HEK293T (cell line): ENCODE measurements at regions of chr12 and their contacts with region 1.

Region 1: DNA sequence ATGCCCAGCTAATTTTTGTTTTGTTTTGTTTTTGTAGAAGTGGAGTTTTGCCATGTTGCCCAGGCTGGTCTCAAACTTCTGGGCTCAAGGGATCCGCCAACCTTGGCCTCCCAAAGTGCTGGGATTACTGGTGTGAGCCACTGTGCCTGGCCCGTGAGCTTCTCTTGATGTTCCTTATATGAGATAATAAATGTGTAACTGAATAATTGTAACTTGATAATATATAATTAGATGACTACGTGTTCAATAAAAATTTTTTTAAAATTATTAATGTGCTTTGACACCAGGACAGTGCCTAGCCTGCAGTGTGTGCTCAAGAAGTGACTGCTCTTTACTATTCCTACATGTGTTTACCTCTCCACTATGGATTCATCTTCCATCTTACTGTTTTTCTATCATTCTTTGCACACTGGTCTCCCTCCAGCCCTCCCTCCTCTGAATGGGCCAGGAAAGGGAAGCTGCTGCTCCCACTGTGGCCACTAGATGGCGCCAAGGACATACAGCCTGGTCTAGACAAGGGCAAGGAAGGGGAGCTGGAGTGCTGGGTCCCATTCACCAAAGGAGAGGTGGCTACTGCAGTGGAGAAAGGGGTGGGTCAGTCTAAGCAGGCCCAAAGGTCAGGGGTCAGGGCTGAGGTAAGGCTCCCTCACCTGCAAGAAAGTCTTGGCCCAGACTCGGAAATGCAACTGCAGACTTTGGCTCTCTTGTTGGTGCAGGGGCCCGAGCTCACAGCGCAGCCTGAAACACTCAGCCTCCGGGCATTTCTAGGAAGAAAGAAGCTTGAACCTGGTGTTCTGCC is 14.7 kb upstream of the ZNF385A start:
- DNase-seq: peak; percentile 91

Region 2: GRCh38 chr12:54379401-54380201 is 19.6 kb before region 1 on chr12:
- CTCF ChIA-PET with region 1: interaction called, 13 read pairs
- POLR2A ChIA-PET with region 1: no interaction called
- DNase-seq: peak; percentile 94

Region 3: GRCh38 chr12:54419088-54419892 is 20.1 kb after region 1 on chr12 and contains the start of gene ITGA5:
- CTCF ChIA-PET with region 1: interaction called, 26 read pairs
- POLR2A ChIA-PET with region 1: interaction called, 9 read pairs
- DNase-seq: peak; percentile 73

Region 4: GRCh38 chr12:54431911-54432814 is 33.0 kb after region 1 on chr12:
- CTCF ChIA-PET with region 1: interaction called, 121 read pairs
- POLR2A ChIA-PET with region 1: no interaction called
- DNase-seq: no peak

Region 5: GRCh38 chr12:54439521-54440255 is 40.5 kb after region 1 on chr12:
- CTCF ChIA-PET with region 1: interaction called, 121 read pairs
- POLR2A ChIA-PET with region 1: interaction called, 11 read pairs
- DNase-seq: peak; percentile 72

Region 6: GRCh38 chr12:54452628-54453027 is 53.4 kb after region 1 on chr12:
- CTCF ChIA-PET with region 1: interaction called, 11 read pairs
- POLR2A ChIA-PET with region 1: interaction called, 3 read pairs
- DNase-seq: no peak

Region 7: DNA sequence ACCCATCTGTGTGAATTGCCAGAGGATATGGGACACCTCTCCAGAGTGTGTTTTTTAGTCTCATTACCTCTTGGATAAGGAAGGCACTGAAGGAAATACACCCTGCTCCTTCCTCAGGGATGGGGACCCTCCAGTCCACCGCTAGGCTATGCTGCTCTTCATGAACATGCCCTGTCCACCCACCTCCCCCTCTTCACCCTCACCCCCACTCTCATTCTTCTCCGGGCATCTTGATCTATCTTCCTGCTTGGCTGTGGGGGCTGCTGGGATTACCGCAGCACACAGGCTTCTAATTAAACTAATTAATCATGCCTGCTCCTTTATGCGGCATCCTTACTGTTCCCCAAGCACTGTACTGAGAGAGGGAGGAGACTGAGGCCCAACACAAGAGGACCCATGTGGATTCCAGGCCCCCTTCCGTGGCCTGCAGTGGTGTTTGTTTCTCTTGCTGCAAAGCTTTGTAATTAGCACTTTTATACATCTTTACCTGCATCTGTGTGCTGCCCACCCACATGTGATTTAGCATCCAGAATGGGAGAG is 142.6 kb after region 1 on chr12:
- CTCF ChIA-PET with region 1: no interaction called
- POLR2A ChIA-PET with region 1: no interaction called
- DNase-seq: no peak